A673 (cell line): ENCODE measurements at regions of chr3 and their contacts with region 1.

Region 1: DNA sequence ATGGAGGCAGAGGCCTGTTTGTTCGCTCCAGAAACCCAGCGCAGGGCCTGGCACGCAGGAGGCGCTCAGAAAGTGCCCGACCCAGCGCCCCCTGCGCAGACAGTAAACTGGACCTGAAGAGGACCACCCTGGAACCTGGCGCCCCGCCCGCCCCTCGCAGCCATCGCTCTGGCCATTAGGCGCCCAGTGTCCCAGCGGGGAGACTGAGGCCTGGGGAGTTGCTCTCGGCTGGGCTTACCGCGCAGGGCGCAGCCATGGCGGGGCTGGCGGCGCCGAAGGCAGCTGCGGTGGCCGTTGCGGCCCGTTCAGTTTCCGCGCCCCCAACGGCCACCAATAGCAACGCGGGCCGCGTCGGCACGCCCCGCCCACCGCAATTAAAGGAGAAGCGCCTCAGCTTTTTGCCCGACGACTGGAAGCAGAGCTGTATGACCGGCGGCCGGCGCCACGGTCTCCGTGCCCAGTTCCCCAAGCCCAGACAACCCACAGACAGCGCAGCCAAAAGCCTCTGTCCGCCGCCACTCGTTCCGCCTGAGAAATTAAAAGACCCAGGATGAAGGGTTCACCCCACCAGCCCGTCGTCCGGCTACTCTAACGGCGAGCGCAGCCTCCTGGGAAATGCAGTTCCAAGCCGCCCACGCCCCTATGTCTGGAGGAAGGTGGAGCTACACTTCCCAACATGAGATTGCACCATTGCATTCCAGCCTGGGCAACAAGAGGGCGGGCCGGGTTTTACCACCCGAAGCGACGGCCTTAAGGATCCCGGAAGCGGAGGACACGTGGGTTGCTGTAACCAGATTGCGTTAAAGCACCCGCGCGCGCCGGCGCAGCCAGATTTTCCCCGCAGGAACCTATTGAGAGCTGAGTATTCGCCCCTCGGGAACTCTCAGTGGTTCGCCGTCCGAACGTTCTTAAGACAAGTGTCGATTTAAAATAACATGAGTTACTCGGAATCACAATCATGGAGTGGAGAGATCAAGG is at the start of gene POC1A:
- DNase-seq: peak; percentile 96
- H3K4me3 ChIP-seq: peak within 1 kb of the TSS; percentile 84
- H3K27ac ChIP-seq: peak within 1 kb of the TSS; percentile 79
- H3K4me1 ChIP-seq: no peaks in the 10 kb centered on the region
- H3K27me3 ChIP-seq: no peaks in the 10 kb centered on the region
- CTCF ChIP-seq: no peak
- total RNA-seq, gene POC1A: 16.1 and 17.8 TPM in 2 replicates

Region 2: DNA sequence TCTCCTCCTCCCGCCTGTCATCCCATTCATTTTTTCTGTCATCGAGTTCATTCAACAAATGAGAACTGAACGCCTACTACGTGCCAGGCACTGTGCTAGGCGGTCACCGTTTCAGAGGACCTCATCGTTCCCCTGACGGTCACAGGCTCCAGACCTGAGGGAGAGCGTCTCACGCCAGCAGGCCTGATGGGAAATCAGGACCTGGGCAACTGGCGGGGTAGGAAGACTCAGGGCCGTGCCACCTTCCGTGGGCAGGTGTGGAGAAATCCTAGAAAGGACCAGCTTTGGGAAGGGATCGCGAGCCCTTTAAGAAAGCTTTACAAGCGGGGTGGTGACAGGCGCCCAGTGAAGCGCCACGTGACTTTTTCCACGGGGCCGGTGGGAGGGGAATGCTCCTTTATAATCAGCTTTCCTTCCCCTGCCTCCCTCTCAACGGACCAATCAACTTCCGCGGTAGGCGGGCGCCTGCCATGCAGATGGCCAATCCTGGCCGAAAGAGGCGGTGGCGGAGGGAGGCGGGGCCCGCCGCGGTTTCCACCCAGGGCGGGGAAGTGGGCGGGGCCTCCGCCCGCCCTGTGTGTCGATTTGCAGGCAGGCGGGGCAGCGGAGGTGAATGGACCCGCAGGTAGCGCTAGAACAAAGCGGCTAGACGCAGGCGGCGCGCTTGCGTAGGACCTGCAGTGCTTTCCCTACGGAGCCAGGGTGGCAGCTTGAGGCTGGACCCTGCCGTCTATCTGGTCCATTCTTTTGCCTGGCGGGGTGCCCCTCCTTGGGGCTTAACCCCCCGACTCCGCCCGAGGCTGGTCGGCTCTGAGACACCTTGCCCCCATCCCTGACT is 97.2 kb before region 1 on chr3:
- CTCF ChIA-PET with region 1: no interaction called
- POLR2A ChIA-PET with region 1: no interaction called
- intact Hi-C with region 1: loop called (anchors 10 kb)
- DNase-seq: peak; percentile 96
- H3K4me3 ChIP-seq: peak overlapping the region; percentile 58
- H3K27ac ChIP-seq: peak overlapping the region; percentile 58
- H3K4me1 ChIP-seq: no peaks in the 10 kb centered on the region
- H3K27me3 ChIP-seq: no peaks in the 10 kb centered on the region
- CTCF ChIP-seq: no peak